Thyroid gland (tissue), 4 donors: ENCODE measurements at regions of chr5 and their contacts with region 1.

Region 1: DNA sequence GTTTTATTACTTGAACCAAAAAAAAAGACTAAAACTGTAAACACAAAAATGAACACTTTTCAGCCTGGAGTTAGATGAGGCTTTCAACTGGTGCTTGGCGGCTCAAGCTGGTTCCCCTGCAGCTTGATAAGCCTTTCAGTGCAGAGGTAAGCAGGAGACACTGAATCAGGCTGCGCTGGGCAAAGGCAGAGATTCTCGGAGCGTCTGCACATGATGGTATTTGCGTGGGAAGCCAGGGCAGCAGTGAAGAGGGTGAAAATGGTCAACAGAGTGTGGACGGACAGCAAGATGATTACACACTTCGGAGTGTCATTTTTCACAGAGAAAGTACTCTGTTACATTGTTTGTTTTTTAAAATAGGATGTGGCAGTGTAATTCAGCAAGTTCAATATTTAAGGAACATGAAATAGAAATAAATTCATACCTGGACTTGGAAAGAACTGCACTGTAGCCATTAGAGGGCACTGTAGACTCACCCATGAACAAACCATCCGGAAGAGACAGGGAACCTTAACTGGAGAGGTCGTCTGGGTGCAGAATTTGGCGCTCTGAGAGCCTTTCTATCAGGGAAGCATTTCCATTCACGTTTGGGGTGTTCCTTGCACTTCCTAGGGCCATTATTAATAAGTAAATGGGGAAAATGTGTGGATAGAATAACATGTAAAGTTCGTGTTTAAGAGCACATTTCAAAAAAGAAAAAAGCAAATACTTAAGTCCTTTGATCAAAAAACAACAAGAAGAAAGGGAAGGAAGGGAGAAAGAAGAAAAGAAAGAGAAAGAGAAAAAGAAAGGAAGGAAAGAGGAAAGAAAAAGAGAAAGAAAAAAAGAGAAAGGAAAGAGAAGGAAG is 69.8 kb downstream of the ICE1 start:
- DNase-seq: peak; percentile 21 to 37
- H3K4me3 ChIP-seq: no peak overlapping the region
- H3K27ac ChIP-seq: no peak overlapping the region
- H3K4me1 ChIP-seq: peaks cover 0 to 12% of the 10 kb centered on the region in 2 donors
- H3K27me3 ChIP-seq: no peaks in the 10 kb centered on the region
- CTCF ChIP-seq: peak; percentile 28 to 89 (median 68)
- POLR2A ChIP-seq: no peak

Region 2: GRCh38 chr5:5658226-5658625 is 165.9 kb after region 1 on chr5:
- intact Hi-C with region 1: no loop called
- DNase-seq: peak; percentile 59 to 68
- H3K4me3 ChIP-seq: no peak overlapping the region
- H3K27ac ChIP-seq: peak overlapping the region in 1 of 3 donors; percentile 51
- H3K4me1 ChIP-seq: no peaks in the 10 kb centered on the region
- H3K27me3 ChIP-seq: no peaks in the 10 kb centered on the region
- CTCF ChIP-seq: no peak
- POLR2A ChIP-seq: no peak

Region 3: DNA sequence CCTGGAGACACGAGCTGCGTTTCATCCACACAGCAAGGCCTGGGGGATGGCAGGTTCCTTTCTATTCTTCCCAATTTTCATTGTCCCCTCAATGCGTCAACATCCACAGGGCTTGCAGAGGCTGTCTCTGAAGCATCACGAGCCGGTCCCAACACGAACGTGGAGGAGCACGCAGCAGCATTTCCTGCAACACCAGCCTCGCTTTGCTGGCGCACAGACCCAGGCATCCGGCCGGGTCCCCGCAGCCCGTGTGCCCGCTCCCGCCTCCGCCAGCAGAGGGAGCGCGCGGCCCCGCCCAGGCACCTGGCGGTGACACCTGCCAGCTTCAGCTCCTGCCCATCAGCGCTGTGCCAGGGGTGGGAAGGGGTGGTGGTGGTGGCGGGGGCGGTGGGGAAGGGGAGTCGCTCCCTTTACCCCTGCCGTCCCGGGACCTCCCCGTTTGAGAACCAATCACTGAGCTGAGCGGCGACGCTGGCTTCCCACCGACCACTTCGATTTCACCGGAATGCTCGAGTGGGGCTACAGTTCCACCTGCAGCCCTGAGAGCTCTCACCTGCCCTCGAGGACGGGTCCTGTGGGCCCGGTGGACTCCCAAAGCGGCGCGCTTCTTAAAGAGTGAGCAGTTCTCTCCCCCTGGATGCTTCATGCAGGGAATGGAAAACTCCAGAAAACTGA is 394.6 kb after region 1 on chr5:
- intact Hi-C with region 1: loop called (anchors 10 kb)
- DNase-seq: peak; percentile 12 to 21
- H3K4me3 ChIP-seq: no peak overlapping the region
- H3K27ac ChIP-seq: no peak overlapping the region
- H3K4me1 ChIP-seq: peaks cover 0 to 5% of the 10 kb centered on the region in 2 donors
- H3K27me3 ChIP-seq: no peaks in the 10 kb centered on the region
- CTCF ChIP-seq: peak in 3 of 6 experiments; percentile 17 to 64 (median 41)
- POLR2A ChIP-seq: no peak